CD8-positive, alpha-beta T cell (primary cell): ENCODE measurements at regions of chr14 and their contacts with region 1.

Region 1: GRCh38 chr14:49620182-49621113 is at the starts of genes MGAT2 and RPL36AL:
- DNase-seq: peak; percentile 85 to 97 (median 93)
- ATAC-seq: peak; percentile 79
- H3K4me3 ChIP-seq: peak within 1 kb of the TSS; percentile 94 to 95
- H3K4me3 Mint-ChIP-seq: peak within 1 kb of the TSS; percentile 97
- H3K27ac ChIP-seq: peak within 1 kb of the TSS; percentile 98 to 99
- H3K27ac Mint-ChIP-seq: peak within 1 kb of the TSS; percentile 100
- H3K4me1 ChIP-seq: peaks cover 40% of the 10 kb centered on the region
- H3K4me1 Mint-ChIP-seq: peaks cover 62% of the 10 kb centered on the region
- H3K27me3 ChIP-seq: no peaks in the 10 kb centered on the region
- H3K27me3 Mint-ChIP-seq: no peaks in the 10 kb centered on the region
- CTCF ChIP-seq: no peak
- total RNA-seq, gene MGAT2: 22.6 to 24.0 TPM
- total RNA-seq, gene RPL36AL: 302 to 318 TPM

Region 2: GRCh38 chr14:49598485-49599300 is 21.8 kb before region 1 on chr14 and contains the start of gene LRR1:
- CTCF ChIA-PET with region 1: interaction called, 12 read pairs
- POLR2A ChIA-PET with region 1: interaction called, 37 read pairs
- intact Hi-C with region 1: loop called (anchors 1 kb)
- DNase-seq: peak; percentile 79 to 91 (median 84)
- ATAC-seq: peak; percentile 86
- H3K4me3 ChIP-seq: peak within 1 kb of the TSS; percentile 84 to 99
- H3K4me3 Mint-ChIP-seq: peak within 1 kb of the TSS; percentile 99
- H3K27ac ChIP-seq: peak within 1 kb of the TSS; percentile 92 to 95
- H3K27ac Mint-ChIP-seq: peak within 1 kb of the TSS; percentile 100
- H3K4me1 ChIP-seq: peaks cover 12% of the 10 kb centered on the region
- H3K4me1 Mint-ChIP-seq: peaks cover 31% of the 10 kb centered on the region
- H3K27me3 ChIP-seq: no peaks in the 10 kb centered on the region
- H3K27me3 Mint-ChIP-seq: no peaks in the 10 kb centered on the region
- CTCF ChIP-seq: no peak
- total RNA-seq, gene LRR1: 6.2 to 7.3 TPM